ENCODE measurements at regions of chr3 and their contacts with region 1.

Region 1: GRCh38 chr3:53259427-53260259 is 3.8 kb upstream of the TKT start:
- DNase-seq: no peak
- H3K4me3 ChIP-seq: no peak overlapping the region
- H3K27me3 ChIP-seq: no peaks in the 10 kb centered on the region
- CTCF ChIP-seq: no peak

Region 2: GRCh38 chr3:52897130-52898122 is 362.2 kb before region 1 on chr3 and contains the start of gene STIMATE:
- CTCF ChIA-PET with region 1: no interaction called
- POLR2A ChIA-PET with region 1: interaction called, 19 read pairs
- DNase-seq: peak; percentile 20
- H3K4me3 ChIP-seq: peak within 1 kb of the TSS; percentile 80
- H3K27me3 ChIP-seq: no peaks in the 10 kb centered on the region
- CTCF ChIP-seq: no peak
- polyA plus RNA-seq, gene STIMATE: 11.6 and 13.5 TPM in 2 replicates

Measured in BJ (cell line).